ENCODE measurements at regions of chr3 and their contacts with region 1.

Region 1: DNA sequence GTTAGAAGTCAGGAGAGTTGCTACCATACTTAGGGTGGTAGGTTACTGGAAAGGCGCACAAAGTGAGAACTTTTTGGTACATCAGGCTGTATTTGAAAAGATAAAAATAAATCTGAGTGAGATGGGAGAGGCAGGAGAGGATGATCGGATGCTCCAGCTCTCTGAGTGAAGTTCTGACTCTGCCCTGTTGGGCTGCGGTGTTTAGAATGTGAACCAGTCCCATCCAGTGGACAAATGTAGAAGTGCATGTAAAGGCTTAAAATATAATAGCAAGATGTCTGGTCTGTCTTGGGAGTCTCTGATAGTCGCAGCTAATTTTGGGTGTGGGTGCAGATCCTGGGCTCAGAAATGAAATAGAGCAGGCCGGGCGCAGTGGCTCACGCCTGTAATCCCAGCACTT is 30.4 kb downstream of the ACKR2 start:
- DNase-seq: peak; percentile 52
- H3K4me3 Mint-ChIP-seq: no peak overlapping the region
- H3K27ac Mint-ChIP-seq: no peak overlapping the region
- H3K4me1 Mint-ChIP-seq: no peaks in the 10 kb centered on the region
- H3K27me3 Mint-ChIP-seq: no peaks in the 10 kb centered on the region

Region 2: GRCh38 chr3:42871592-42872196 is 32.1 kb after region 1 on chr3:
- CTCF ChIA-PET with region 1: interaction called, 10 read pairs
- POLR2A ChIA-PET with region 1: no interaction called
- DNase-seq: no peak
- H3K4me3 Mint-ChIP-seq: no peak overlapping the region
- H3K27ac Mint-ChIP-seq: no peak overlapping the region
- H3K4me1 Mint-ChIP-seq: no peaks in the 10 kb centered on the region
- H3K27me3 Mint-ChIP-seq: peaks cover 5% of the 10 kb centered on the region

Region 3: DNA sequence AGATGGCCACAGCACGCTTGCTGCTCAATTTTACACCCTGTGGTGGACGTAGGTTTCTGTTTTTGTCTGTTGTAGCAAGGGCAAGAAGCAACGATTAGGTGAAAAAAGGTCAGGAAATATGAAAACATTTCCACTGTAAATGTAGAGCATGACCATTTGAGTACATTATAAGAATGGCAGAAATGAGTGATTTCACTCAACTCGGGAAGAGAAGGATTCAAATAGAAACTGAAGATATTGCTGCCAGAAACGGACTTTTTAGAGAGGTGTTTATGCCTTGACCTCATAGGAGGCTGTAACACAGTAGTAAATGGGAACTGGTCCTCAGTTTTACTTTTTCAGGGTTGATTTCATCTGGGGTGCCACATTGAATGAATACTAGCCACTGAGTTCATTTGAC is 106.4 kb after region 1 on chr3:
- CTCF ChIA-PET with region 1: no interaction called
- POLR2A ChIA-PET with region 1: no interaction called
- DNase-seq: no peak
- H3K4me3 Mint-ChIP-seq: no peak overlapping the region
- H3K27ac Mint-ChIP-seq: no peak overlapping the region
- H3K4me1 Mint-ChIP-seq: no peaks in the 10 kb centered on the region
- H3K27me3 Mint-ChIP-seq: no peaks in the 10 kb centered on the region